IMR-90 (cell line): ENCODE measurements at regions of chr17 and their contacts with region 1.

Region 1: GRCh38 chr17:33990943-33991706 is 264.0 kb upstream of the CCL2 start:
- DNase-seq: no peak
- ATAC-seq: no peak
- H3K4me3 ChIP-seq: no peak overlapping the region
- H3K27ac ChIP-seq: no peak overlapping the region
- H3K4me1 ChIP-seq: no peaks in the 10 kb centered on the region
- H3K27me3 ChIP-seq: no peaks in the 10 kb centered on the region
- CTCF ChIP-seq: no peak
- POLR2A ChIP-seq: no peak
- RAD21 ChIP-seq: no peak

Region 2: DNA sequence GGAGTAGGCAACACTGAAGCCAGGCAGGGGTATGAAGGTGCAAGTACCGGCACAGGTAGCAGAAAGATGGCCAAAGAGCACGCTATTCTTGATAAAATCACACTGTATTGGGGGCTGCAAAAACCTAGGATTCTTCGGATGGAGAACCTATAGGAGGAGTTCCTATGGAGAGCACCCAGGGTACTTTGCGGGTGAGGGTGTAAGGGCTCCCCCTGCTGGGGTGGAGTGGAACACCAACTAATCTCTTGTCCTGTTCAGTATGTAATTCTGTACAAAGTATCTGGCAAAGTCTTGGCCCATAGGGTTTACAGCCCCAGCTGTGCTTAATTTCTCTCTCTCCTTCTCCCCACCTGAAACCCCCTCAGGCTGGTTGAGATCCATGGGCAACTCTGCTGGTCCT is 305.0 kb before region 1 on chr17:
- CTCF ChIA-PET with region 1: no interaction called
- POLR2A ChIA-PET with region 1: no interaction called
- dilution Hi-C with region 1: no loop called
- in situ Hi-C with region 1: no loop called
- intact Hi-C with region 1: no loop called
- DNase-seq: no peak
- ATAC-seq: no peak
- H3K4me3 ChIP-seq: no peak overlapping the region
- H3K27ac ChIP-seq: no peak overlapping the region
- H3K4me1 ChIP-seq: no peaks in the 10 kb centered on the region
- H3K27me3 ChIP-seq: no peaks in the 10 kb centered on the region
- CTCF ChIP-seq: no peak; the same call in 1 of the 2 replicates
- POLR2A ChIP-seq: no peak
- RAD21 ChIP-seq: no peak

Region 3: DNA sequence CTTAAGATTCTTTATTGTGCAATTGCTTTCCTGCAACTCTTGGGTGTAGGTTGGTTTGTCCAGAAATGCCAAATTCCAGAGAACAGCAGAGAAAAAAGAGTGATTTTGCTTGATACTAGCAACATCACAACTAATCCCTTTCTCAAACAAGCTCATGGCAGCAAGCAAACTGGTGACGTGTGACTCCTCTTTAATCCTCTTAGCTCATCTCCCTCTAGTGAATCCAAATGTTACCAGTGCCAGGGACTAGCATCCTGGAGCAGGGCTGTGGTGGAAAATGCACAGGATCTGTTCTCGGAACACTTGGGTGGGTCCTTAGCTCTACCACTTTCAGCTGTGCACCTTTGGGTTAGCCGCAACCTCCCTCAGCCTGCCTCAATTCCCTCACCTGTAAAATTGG is 59.9 kb after region 1 on chr17:
- CTCF ChIA-PET with region 1: no interaction called
- POLR2A ChIA-PET with region 1: no interaction called
- dilution Hi-C with region 1: no loop called
- in situ Hi-C with region 1: loop called (anchors 10 kb)
- intact Hi-C with region 1: no loop called
- DNase-seq: no peak
- ATAC-seq: no peak
- H3K4me3 ChIP-seq: no peak overlapping the region
- H3K27ac ChIP-seq: no peak overlapping the region
- H3K4me1 ChIP-seq: no peaks in the 10 kb centered on the region
- H3K27me3 ChIP-seq: no peaks in the 10 kb centered on the region
- CTCF ChIP-seq: no peak
- POLR2A ChIP-seq: no peak
- RAD21 ChIP-seq: no peak